IMR-90 (cell line): ENCODE measurements at regions of chr10 and their contacts with region 1.

Region 1: DNA sequence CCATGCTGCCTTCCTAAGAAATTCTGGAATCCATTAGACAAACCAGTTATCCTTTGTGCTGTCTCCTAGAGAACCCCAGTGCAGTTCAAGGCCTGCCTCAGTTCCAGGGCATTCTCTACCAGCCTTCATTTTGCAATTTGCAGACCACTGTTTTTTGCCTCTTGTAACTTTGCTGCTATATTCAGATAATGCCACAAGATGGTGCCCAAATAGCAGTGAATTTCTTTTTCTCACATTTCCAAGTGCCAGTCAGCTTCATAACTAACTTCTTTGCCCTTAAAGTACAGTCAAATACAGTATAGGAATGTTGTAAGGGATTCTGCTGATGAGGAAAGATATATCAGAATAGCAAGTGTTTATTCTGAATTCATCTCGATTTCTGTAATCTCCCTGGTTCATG is 25.2 kb downstream of the LOXL4 start:
- DNase-seq: peak; percentile 56
- ATAC-seq: peak; percentile 44; the same call in 1 of the 2 replicates
- H3K4me3 ChIP-seq: no peak overlapping the region
- H3K27ac ChIP-seq: no peak overlapping the region
- H3K4me1 ChIP-seq: peaks cover 18% of the 10 kb centered on the region
- H3K27me3 ChIP-seq: no peaks in the 10 kb centered on the region
- CTCF ChIP-seq: peak; percentile 61
- POLR2A ChIP-seq: no peak
- RAD21 ChIP-seq: peak; percentile 71

Region 2: GRCh38 chr10:98302741-98303365 is 60.0 kb after region 1 on chr10:
- CTCF ChIA-PET with region 1: interaction called, 3 read pairs
- POLR2A ChIA-PET with region 1: no interaction called
- dilution Hi-C with region 1: no loop called
- in situ Hi-C with region 1: loop called (anchors 5 kb)
- intact Hi-C with region 1: no loop called
- DNase-seq: no peak
- ATAC-seq: peak; percentile 29; the same call in 1 of the 2 replicates
- H3K4me3 ChIP-seq: no peak overlapping the region
- H3K27ac ChIP-seq: no peak overlapping the region
- H3K4me1 ChIP-seq: 0 out of 2 replicates have a peak, but pooled peaks cover 2% of the 10 kb centered on the region
- H3K27me3 ChIP-seq: peaks cover 24% of the 10 kb centered on the region
- CTCF ChIP-seq: no peak
- POLR2A ChIP-seq: no peak
- RAD21 ChIP-seq: no peak

Region 3: GRCh38 chr10:98391578-98391991 is 148.8 kb after region 1 on chr10:
- CTCF ChIA-PET with region 1: interaction called, 4 read pairs
- POLR2A ChIA-PET with region 1: no interaction called
- dilution Hi-C with region 1: no loop called
- in situ Hi-C with region 1: loop called (anchors 5 kb)
- intact Hi-C with region 1: loop called (anchors 1 kb)
- DNase-seq: peak; percentile 49
- ATAC-seq: peak; percentile 28; the same call in 1 of the 2 replicates
- H3K4me3 ChIP-seq: no peak overlapping the region
- H3K27ac ChIP-seq: no peak overlapping the region
- H3K4me1 ChIP-seq: peaks cover 5% of the 10 kb centered on the region; the same call in 1 of the 2 replicates
- H3K27me3 ChIP-seq: no peaks in the 10 kb centered on the region
- CTCF ChIP-seq: no peak
- POLR2A ChIP-seq: no peak
- RAD21 ChIP-seq: no peak

Region 4: GRCh38 chr10:99582255-99582770 is 1339.5 kb after region 1 on chr10:
- CTCF ChIA-PET with region 1: no interaction called
- POLR2A ChIA-PET with region 1: no interaction called
- dilution Hi-C with region 1: no loop called
- in situ Hi-C with region 1: no loop called
- intact Hi-C with region 1: no loop called
- DNase-seq: no peak
- ATAC-seq: no peak
- H3K4me3 ChIP-seq: no peak overlapping the region
- H3K27ac ChIP-seq: no peak overlapping the region
- H3K4me1 ChIP-seq: no peaks in the 10 kb centered on the region
- H3K27me3 ChIP-seq: peaks cover 46% of the 10 kb centered on the region
- CTCF ChIP-seq: no peak
- POLR2A ChIP-seq: no peak
- RAD21 ChIP-seq: no peak